PC-9 (cell line): ENCODE measurements at regions of chr4 and their contacts with region 1.

Region 1: GRCh38 chr4:88646528-88647280 is 50.9 kb downstream of the NAP1L5 start:
- DNase-seq: peak; percentile 36 to 42
- H3K4me3 ChIP-seq: no peak overlapping the region
- H3K27ac ChIP-seq: no peak overlapping the region
- H3K4me1 ChIP-seq: no peaks in the 10 kb centered on the region
- H3K27me3 ChIP-seq: no peaks in the 10 kb centered on the region
- CTCF ChIP-seq: no peak

Region 2: DNA sequence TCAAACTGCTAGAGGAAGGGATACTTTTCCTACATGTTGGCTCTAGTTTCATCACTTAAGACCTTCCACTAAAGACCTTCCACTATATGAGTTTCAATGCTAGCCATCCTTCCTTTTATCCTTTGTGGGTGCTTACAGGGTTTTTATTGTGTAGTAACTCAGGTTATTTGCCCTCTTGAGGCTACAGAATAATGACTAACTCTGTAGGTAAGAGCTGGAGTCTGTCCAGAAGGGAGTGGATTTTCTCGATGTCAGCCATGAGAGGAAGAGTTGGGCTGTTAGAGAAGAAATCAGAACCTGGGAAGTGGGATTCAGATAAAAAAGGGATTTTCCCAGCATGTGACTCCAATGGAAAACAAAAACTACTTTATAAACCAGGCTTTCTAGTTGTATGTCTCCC is 217.3 kb before region 1 on chr4:
- CTCF ChIA-PET with region 1: no interaction called
- POLR2A ChIA-PET with region 1: no interaction called
- intact Hi-C with region 1: no loop called
- DNase-seq: no peak
- H3K4me3 ChIP-seq: no peak overlapping the region
- H3K27ac ChIP-seq: no peak overlapping the region
- H3K4me1 ChIP-seq: no peaks in the 10 kb centered on the region
- H3K27me3 ChIP-seq: no peaks in the 10 kb centered on the region
- CTCF ChIP-seq: no peak

Region 3: GRCh38 chr4:88600176-88600838 is 46.4 kb before region 1 on chr4:
- CTCF ChIA-PET with region 1: no interaction called
- POLR2A ChIA-PET with region 1: no interaction called
- intact Hi-C with region 1: loop called (anchors 2 kb)
- DNase-seq: peak in 1 of 2 experiments; percentile 91
- H3K4me3 ChIP-seq: peak overlapping the region; percentile 34; the same call in 1 of the 2 replicates
- H3K27ac ChIP-seq: peak overlapping the region; percentile 97
- H3K4me1 ChIP-seq: peaks cover 35% of the 10 kb centered on the region
- H3K27me3 ChIP-seq: no peaks in the 10 kb centered on the region
- CTCF ChIP-seq: no peak

Region 4: GRCh38 chr4:89069481-89069880 is 422.8 kb after region 1 on chr4:
- CTCF ChIA-PET with region 1: no interaction called
- POLR2A ChIA-PET with region 1: no interaction called
- intact Hi-C with region 1: no loop called
- DNase-seq: no peak
- H3K4me3 ChIP-seq: no peak overlapping the region
- H3K27ac ChIP-seq: no peak overlapping the region
- H3K4me1 ChIP-seq: no peaks in the 10 kb centered on the region
- H3K27me3 ChIP-seq: no peaks in the 10 kb centered on the region
- CTCF ChIP-seq: no peak